ENCODE measurements at regions of chrX and their contacts with region 1.

Region 1: DNA sequence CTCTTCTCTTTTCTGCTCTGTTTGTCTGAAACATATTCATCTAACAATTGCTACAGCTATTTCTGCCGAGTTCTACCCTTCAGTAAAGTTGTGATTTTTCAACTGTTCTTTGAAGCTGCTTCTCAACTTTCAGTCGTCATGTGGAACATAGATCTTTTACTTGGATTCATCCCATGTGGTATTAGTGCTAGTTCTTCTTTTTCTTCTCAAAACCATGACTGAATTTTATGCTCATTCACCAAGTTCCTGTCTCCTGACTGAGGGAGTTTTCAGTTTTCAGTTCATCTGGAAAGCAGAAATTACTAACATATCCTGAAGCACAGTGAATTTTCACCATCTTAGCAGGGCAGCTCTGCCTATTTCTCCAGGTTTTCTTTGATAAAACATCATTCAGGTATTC is 12.1 kb downstream of the ACSL4 start:
- DNase-seq: no peak
- ATAC-seq: peak; percentile 31
- H3K4me3 ChIP-seq: no peak overlapping the region
- H3K27ac ChIP-seq: no peak overlapping the region; the same call in 1 of the 2 replicates
- H3K4me1 ChIP-seq: peaks cover 10% of the 10 kb centered on the region
- H3K27me3 ChIP-seq: no peaks in the 10 kb centered on the region
- CTCF ChIP-seq: no peak
- EP300 ChIP-seq: no peak
- POLR2A ChIP-seq: no peak
- RAD21 ChIP-seq: no peak

Region 2: GRCh38 chrX:109732780-109733657 is 12.1 kb after region 1 on chrX and contains the start of gene ACSL4:
- CTCF ChIA-PET with region 1: interaction called, 13 read pairs
- POLR2A ChIA-PET with region 1: interaction called, 6 read pairs
- RAD21 ChIA-PET with region 1: interaction called, 28 read pairs
- SMC1A ChIA-PET with region 1: interaction called, 25 read pairs
- in situ Hi-C with region 1: no loop called
- intact Hi-C with region 1: no loop called
- DNase-seq: no peak
- ATAC-seq: peak; percentile 91
- H3K4me3 ChIP-seq: peak within 1 kb of the TSS; percentile 69
- H3K27ac ChIP-seq: peak within 1 kb of the TSS; percentile 88
- H3K4me1 ChIP-seq: no peaks in the 10 kb centered on the region
- H3K27me3 ChIP-seq: no peaks in the 10 kb centered on the region
- CTCF ChIP-seq: no peak
- EP300 ChIP-seq: no peak
- POLR2A ChIP-seq: peak; percentile 84
- RAD21 ChIP-seq: no peak
- polyA plus RNA-seq, gene ACSL4: 20.7 to 23.6 TPM

Region 3: GRCh38 chrX:109840585-109840984 is 119.6 kb after region 1 on chrX:
- CTCF ChIA-PET with region 1: interaction called, 3 read pairs
- POLR2A ChIA-PET with region 1: interaction called, 3 read pairs
- RAD21 ChIA-PET with region 1: interaction called, 5 read pairs
- SMC1A ChIA-PET with region 1: interaction called, 17 read pairs
- in situ Hi-C with region 1: no loop called
- intact Hi-C with region 1: no loop called
- DNase-seq: no peak
- ATAC-seq: peak; percentile 36
- H3K4me3 ChIP-seq: no peak overlapping the region
- H3K27ac ChIP-seq: no peak overlapping the region
- H3K4me1 ChIP-seq: peaks cover 6% of the 10 kb centered on the region; the same call in 1 of the 2 replicates
- H3K27me3 ChIP-seq: no peaks in the 10 kb centered on the region
- CTCF ChIP-seq: no peak
- EP300 ChIP-seq: no peak
- POLR2A ChIP-seq: no peak
- RAD21 ChIP-seq: no peak

Region 4: DNA sequence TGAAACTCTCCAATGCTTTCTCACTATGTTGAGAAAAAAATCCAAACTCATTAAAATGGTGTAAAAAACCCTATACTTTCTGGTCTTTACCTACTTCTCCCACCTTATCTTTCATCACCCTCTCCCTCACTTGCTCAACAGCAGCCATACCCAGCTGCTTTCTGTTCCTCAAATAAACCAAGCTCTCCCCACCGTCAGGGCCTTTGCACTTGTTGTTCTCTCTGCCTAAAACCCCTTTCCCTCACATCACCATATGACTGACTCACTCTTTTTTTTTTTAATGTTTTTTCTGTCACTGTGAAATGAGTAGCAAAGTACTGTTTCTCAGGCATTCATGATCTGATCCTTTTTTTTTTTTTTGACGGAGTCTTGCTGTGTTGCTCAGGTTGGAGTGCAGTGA is 159.7 kb after region 1 on chrX:
- CTCF ChIA-PET with region 1: interaction called, 3 read pairs
- POLR2A ChIA-PET with region 1: no interaction called
- RAD21 ChIA-PET with region 1: interaction called, 10 read pairs
- SMC1A ChIA-PET with region 1: interaction called, 4 read pairs
- in situ Hi-C with region 1: loop called (anchors 5 kb)
- intact Hi-C with region 1: no loop called
- DNase-seq: peak; percentile 39
- ATAC-seq: peak; percentile 98
- H3K4me3 ChIP-seq: no peak overlapping the region
- H3K27ac ChIP-seq: no peak overlapping the region
- H3K4me1 ChIP-seq: no peaks in the 10 kb centered on the region
- H3K27me3 ChIP-seq: no peaks in the 10 kb centered on the region
- CTCF ChIP-seq: no peak
- EP300 ChIP-seq: peak in 1 of 2 experiments; percentile 28; a peak in 1 of 4 replicates
- POLR2A ChIP-seq: no peak
- RAD21 ChIP-seq: no peak